ENCODE measurements at regions of chr3 and their contacts with region 1.

Region 1: DNA sequence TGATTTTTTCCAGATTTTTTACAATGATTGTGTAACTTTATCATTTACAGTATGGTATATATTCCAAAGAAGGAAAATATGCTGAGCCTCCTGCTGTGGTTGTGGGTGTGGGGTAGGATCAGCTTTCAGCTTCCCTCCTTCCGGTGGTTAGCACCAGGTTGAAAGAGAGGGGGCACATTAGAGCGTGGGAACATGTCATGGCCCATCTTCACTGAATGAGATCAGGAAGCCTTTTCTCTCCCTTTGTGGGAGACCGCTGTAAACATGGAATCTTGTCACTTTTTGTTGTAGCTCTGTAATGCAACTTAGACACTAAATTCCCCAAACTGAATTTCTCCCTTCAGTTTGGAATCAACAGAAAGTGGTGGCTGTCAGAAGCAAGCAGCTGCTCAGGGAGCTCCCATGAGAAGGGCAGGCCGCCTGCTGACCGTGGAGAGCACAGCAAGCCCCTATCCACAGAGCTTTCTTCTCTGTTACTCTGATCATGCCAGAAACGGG is 86.7 kb upstream of the LIMD1 start:
- DNase-seq: no peak
- H3K4me3 Mint-ChIP-seq: no peak overlapping the region
- H3K27ac Mint-ChIP-seq: no peak overlapping the region
- H3K4me1 Mint-ChIP-seq: peaks cover 10% of the 10 kb centered on the region
- H3K27me3 Mint-ChIP-seq: no peaks in the 10 kb centered on the region

Region 2: GRCh38 chr3:44090036-44090435 is 1417.8 kb before region 1 on chr3:
- CTCF ChIA-PET with region 1: no interaction called
- POLR2A ChIA-PET with region 1: no interaction called
- intact Hi-C with region 1: no loop called
- DNase-seq: no peak
- H3K4me3 Mint-ChIP-seq: no peak overlapping the region
- H3K27ac Mint-ChIP-seq: no peak overlapping the region
- H3K4me1 Mint-ChIP-seq: no peaks in the 10 kb centered on the region
- H3K27me3 Mint-ChIP-seq: peaks cover 20% of the 10 kb centered on the region

Region 3: DNA sequence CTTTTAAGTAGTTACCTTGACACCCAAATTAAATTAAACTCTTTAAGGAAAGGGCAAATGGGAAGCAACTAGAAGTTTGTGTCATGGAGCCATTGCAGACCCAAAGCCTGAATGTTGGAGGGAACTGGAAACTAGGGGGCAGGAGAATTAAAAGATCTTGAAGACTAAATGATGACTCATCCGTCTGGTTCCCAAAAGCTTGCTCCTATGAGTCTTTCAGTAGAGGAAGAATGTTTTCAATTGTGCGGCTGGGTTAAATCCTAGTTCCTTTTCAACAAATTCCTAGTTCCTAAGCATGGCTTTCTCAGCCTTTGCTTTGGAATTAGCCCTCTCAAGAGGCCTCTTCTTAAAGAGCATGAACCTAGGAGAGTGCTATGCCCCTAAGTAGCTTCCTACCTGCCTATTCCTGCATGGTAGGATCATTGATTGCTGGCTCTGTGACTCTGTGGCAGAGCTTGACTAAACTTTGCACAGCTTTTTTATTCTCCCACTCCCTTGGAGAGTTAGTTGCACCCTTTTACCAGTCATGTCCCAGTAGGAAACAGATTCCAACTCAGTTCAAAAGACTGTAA is 464.1 kb before region 1 on chr3:
- CTCF ChIA-PET with region 1: interaction called, 33 read pairs
- POLR2A ChIA-PET with region 1: no interaction called
- intact Hi-C with region 1: loop called (anchors 2 kb)
- DNase-seq: no peak
- H3K4me3 Mint-ChIP-seq: no peak overlapping the region
- H3K27ac Mint-ChIP-seq: no peak overlapping the region
- H3K4me1 Mint-ChIP-seq: peaks cover 16% of the 10 kb centered on the region
- H3K27me3 Mint-ChIP-seq: peaks cover 10% of the 10 kb centered on the region

Region 4: DNA sequence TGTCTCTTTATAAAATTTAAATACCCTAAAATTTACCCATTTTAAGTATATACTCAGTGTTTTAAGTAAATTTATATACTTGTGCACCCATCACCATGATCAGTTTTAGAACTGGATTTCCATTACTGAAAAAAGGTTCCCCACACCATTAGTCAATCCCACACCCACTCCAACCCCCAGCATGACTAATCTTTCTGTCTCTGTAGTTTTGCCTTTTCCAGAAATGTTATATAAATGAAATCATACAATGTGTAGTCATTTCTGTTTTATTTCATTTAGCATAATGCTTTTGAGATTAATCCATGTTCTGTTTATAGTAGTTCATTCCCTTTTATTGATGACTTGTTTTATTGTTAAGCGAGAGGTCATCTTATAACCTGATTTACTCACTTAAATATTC is 20.6 kb after region 1 on chr3:
- CTCF ChIA-PET with region 1: interaction called, 4 read pairs
- POLR2A ChIA-PET with region 1: no interaction called
- intact Hi-C with region 1: loop called (anchors 1 kb)
- DNase-seq: peak; percentile 68
- H3K4me3 Mint-ChIP-seq: no peak overlapping the region
- H3K27ac Mint-ChIP-seq: no peak overlapping the region
- H3K4me1 Mint-ChIP-seq: peaks cover 16% of the 10 kb centered on the region
- H3K27me3 Mint-ChIP-seq: no peaks in the 10 kb centered on the region

Region 5: GRCh38 chr3:45593708-45594609 is 86.1 kb after region 1 on chr3:
- CTCF ChIA-PET with region 1: interaction called, 7 read pairs
- POLR2A ChIA-PET with region 1: interaction called, 3 read pairs
- intact Hi-C with region 1: loop called (anchors 5 kb)
- DNase-seq: peak; percentile 75
- H3K4me3 Mint-ChIP-seq: peak overlapping the region; percentile 84
- H3K27ac Mint-ChIP-seq: peak overlapping the region; percentile 74
- H3K4me1 Mint-ChIP-seq: peaks cover 49% of the 10 kb centered on the region
- H3K27me3 Mint-ChIP-seq: no peaks in the 10 kb centered on the region

Region 6: GRCh38 chr3:45688882-45689756 is 181.2 kb after region 1 on chr3 and contains the start of gene SACM1L:
- CTCF ChIA-PET with region 1: interaction called, 16 read pairs
- POLR2A ChIA-PET with region 1: no interaction called
- intact Hi-C with region 1: no loop called
- DNase-seq: peak; percentile 98
- H3K4me3 Mint-ChIP-seq: peak within 1 kb of the TSS; percentile 75
- H3K27ac Mint-ChIP-seq: peak within 1 kb of the TSS; percentile 85
- H3K4me1 Mint-ChIP-seq: peaks cover 44% of the 10 kb centered on the region
- H3K27me3 Mint-ChIP-seq: peaks cover 4% of the 10 kb centered on the region
- total RNA-seq, gene SACM1L: 64.3 to 71.2 TPM

Measured in activated CD4-positive, alpha-beta memory T cell treated with anti-CD3 and anti-CD28 coated beads for 36 hours (primary cell).